ENCODE measurements at regions of chr10 and their contacts with region 1.

Region 1: GRCh38 chr10:128263891-128264688 is 137.9 kb upstream of the MKI67 start:
- DNase-seq: peak; percentile 68
- H3K4me3 ChIP-seq: peak overlapping the region in 1 of 2 experiments; percentile 47; a peak in 1 of 4 replicates
- H3K27ac ChIP-seq: peak overlapping the region in 1 of 2 experiments; percentile 71; a peak in 2 of 4 replicates
- H3K4me1 ChIP-seq: peaks cover 0 to 19% of the 10 kb centered on the region in 2 experiments; a peak in 2 of 4 replicates
- H3K27me3 ChIP-seq: no peaks in the 10 kb centered on the region
- CTCF ChIP-seq: peak; percentile 46
- EP300 ChIP-seq: no peak; a peak in 1 of 4 replicates
- RAD21 ChIP-seq: peak; percentile 56

Region 2: DNA sequence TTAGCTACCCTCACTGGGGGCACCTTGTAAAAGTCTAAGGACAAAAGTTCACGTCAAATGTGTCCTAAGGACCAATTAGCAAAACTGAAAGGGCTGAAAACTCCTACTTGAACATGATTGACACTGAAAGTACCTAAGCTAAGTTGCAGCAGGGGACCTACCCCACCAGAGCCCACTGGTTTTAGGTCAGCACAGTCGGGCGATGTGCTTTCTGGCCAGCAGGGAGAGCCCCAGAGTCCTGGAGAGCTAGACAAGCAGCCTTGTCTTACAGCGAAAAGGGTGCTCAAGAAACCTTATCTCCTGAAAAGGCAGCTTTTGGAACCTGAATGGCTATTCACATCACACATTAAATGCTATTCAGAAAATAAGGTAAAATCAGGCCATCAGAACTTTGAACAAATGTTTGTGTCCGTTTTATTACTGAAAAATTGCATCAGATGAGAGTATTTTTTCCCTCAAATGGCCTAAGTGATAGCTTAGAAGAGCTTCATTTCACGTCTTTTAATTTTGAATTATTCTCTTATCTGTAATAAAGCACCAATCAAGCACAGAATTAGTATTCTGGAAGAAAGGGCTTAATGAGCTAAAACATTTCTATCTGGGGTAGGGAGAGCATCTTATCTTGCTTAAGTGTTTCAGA is 85.7 kb before region 1 on chr10:
- CTCF ChIA-PET with region 1: no interaction called
- POLR2A ChIA-PET with region 1: no interaction called
- DNase-seq: peak; percentile 39
- H3K4me3 ChIP-seq: no peak overlapping the region
- H3K27ac ChIP-seq: no peak overlapping the region
- H3K4me1 ChIP-seq: no peaks in the 10 kb centered on the region
- H3K27me3 ChIP-seq: no peaks in the 10 kb centered on the region
- CTCF ChIP-seq: peak; percentile 29; the same call in 1 of the 2 replicates
- EP300 ChIP-seq: no peak
- RAD21 ChIP-seq: peak; percentile 44

Region 3: GRCh38 chr10:128211953-128212727 is 52.0 kb before region 1 on chr10:
- CTCF ChIA-PET with region 1: interaction called, 15 read pairs
- POLR2A ChIA-PET with region 1: no interaction called
- DNase-seq: peak; percentile 97
- H3K4me3 ChIP-seq: peak overlapping the region; percentile 42 to 57; a peak in 3 of 4 replicates
- H3K27ac ChIP-seq: no peak overlapping the region
- H3K4me1 ChIP-seq: peaks cover 0 to 9% of the 10 kb centered on the region in 2 experiments; a peak in 1 of 4 replicates
- H3K27me3 ChIP-seq: no peaks in the 10 kb centered on the region
- CTCF ChIP-seq: peak; percentile 78
- EP300 ChIP-seq: no peak
- RAD21 ChIP-seq: peak; percentile 61

Region 4: DNA sequence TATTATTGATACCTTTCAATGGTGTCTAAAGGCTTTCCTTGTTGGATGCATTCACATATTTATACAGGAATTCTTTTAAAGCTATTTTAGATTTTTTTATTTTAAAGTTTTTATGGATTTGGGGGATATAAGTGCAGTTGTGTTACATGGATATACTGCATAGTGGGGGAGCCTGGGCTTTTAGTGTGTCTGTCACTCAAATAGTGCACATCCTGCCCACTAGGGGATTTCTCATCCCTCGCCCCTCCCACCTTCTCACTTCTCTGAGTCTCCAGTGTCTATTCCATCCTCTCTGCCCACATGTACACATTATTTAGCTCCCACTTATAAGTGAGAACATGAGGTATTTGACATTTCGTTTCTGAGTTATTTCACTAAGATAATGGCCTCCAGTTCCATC is 16.2 kb after region 1 on chr10:
- CTCF ChIA-PET with region 1: interaction called, 16 read pairs
- POLR2A ChIA-PET with region 1: no interaction called
- DNase-seq: no peak
- H3K4me3 ChIP-seq: no peak overlapping the region
- H3K27ac ChIP-seq: no peak overlapping the region
- H3K4me1 ChIP-seq: peaks cover 0 to 11% of the 10 kb centered on the region in 2 experiments; a peak in 1 of 4 replicates
- H3K27me3 ChIP-seq: no peaks in the 10 kb centered on the region
- CTCF ChIP-seq: no peak
- EP300 ChIP-seq: no peak
- RAD21 ChIP-seq: no peak

Region 5: GRCh38 chr10:128310971-128311658 is 47.0 kb after region 1 on chr10:
- CTCF ChIA-PET with region 1: no interaction called
- POLR2A ChIA-PET with region 1: no interaction called
- DNase-seq: no peak
- H3K4me3 ChIP-seq: no peak overlapping the region
- H3K27ac ChIP-seq: no peak overlapping the region
- H3K4me1 ChIP-seq: no peaks in the 10 kb centered on the region
- H3K27me3 ChIP-seq: no peaks in the 10 kb centered on the region
- CTCF ChIP-seq: no peak
- EP300 ChIP-seq: no peak
- RAD21 ChIP-seq: no peak

Region 6: DNA sequence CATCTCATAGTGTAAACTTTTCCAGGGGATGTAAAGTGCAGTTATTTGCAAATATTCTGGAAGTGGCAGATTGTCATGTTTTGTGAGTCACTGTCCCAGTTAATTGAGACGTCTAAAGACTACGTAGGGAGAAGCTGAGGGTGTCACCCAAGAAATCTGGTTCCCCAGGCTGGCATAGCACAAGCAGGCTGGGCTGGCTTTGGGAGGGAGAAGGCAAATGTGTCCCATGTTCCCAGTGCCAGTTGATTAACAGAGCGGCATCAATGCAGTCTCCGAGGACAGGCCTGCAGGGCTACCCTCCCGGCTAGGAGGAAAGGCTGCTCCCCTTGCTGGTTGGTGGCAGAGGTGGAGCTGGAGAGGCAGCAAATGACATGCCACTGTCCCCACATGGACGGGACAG is 250.4 kb after region 1 on chr10:
- CTCF ChIA-PET with region 1: interaction called, 12 read pairs
- POLR2A ChIA-PET with region 1: no interaction called
- DNase-seq: no peak
- H3K4me3 ChIP-seq: no peak overlapping the region
- H3K27ac ChIP-seq: no peak overlapping the region
- H3K4me1 ChIP-seq: peaks cover 0 to 14% of the 10 kb centered on the region in 2 experiments; a peak in 1 of 4 replicates
- H3K27me3 ChIP-seq: no peaks in the 10 kb centered on the region
- CTCF ChIP-seq: no peak
- EP300 ChIP-seq: no peak
- RAD21 ChIP-seq: no peak

Region 7: DNA sequence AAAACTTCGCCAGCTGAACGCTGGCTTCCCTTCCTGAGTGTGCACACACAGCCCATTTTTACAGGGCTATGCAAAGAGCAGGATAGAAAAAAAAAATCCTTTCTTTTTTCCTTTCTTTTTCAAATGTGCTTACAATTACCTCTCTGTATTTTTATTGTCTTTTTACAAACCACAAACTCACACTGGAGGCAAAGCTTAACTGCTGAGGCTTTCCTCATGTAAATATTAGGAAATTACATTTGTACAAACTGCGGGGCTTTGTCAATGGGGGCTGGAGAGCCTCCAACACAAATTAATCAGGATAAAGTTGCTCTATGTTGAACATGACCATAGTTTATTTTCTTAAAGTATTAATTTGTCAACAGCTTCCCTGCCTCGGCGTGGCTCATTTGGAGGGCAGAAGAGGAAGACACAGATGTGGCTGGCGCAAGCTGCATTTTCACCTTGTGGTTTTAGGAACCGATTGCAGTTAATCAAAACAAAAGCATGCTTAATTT is 273.8 kb after region 1 on chr10:
- CTCF ChIA-PET with region 1: interaction called, 27 read pairs
- POLR2A ChIA-PET with region 1: no interaction called
- DNase-seq: no peak
- H3K4me3 ChIP-seq: no peak overlapping the region; a peak in 1 of 4 replicates
- H3K27ac ChIP-seq: no peak overlapping the region
- H3K4me1 ChIP-seq: peaks cover 0 to 9% of the 10 kb centered on the region in 2 experiments; a peak in 1 of 4 replicates
- H3K27me3 ChIP-seq: no peaks in the 10 kb centered on the region
- CTCF ChIP-seq: no peak
- EP300 ChIP-seq: no peak
- RAD21 ChIP-seq: no peak

Measured in SK-N-SH (cell line).